Psoas muscle (tissue), 8 donors: ENCODE measurements at regions of chr1 and their contacts with region 1.

Region 1: DNA sequence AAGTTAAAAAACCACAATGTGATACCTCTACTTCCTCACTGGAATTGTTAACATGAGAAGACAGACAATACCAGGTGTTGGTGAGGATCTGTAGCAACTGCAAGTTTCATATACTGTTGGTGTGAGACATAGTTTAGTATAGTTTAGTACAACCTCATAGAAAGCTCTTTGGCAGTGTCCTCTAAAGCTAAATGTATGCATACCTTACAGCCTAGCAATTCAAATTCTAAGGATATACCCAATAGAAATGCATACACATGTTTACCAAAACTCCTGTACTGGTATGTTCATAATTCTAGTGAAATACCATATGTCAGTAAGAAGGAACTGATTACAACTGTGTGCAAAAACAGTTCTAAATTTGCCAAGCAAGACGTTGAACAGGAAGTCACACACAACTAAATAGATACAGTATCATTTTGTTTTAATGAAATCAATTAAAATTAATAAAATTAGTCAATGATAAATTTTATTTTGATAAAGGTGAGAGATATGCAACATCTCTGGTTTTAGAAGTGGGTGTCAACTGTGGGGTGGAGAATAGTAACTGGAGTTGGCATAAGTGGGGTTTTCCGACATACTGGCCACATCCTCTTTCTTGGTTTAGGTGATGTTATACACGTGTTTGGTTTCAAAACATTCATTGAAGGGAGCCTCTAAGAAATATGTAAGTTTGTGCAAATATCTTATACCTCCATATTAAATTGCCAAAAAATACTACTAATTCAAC is 450.7 kb downstream of the PTPRC start:
- DNase-seq: no peak
- ATAC-seq: no peak
- H3K4me3 ChIP-seq: no peak overlapping the region
- H3K27ac ChIP-seq: no peak overlapping the region
- H3K4me1 ChIP-seq: no peaks in the 10 kb centered on the region
- H3K27me3 ChIP-seq: no peaks in the 10 kb centered on the region
- CTCF ChIP-seq: no peak

Region 2: GRCh38 chr1:198848649-198849048 is 240.9 kb before region 1 on chr1:
- intact Hi-C with region 1: no loop called
- DNase-seq: no peak
- ATAC-seq: no peak
- H3K4me3 ChIP-seq: no peak overlapping the region
- H3K27ac ChIP-seq: no peak overlapping the region
- H3K4me1 ChIP-seq: peaks cover 8% of the 10 kb centered on the region
- H3K27me3 ChIP-seq: no peaks in the 10 kb centered on the region
- CTCF ChIP-seq: no peak

Region 3: GRCh38 chr1:199123615-199124014 is 34.1 kb after region 1 on chr1:
- intact Hi-C with region 1: loop called in 1 of 2 experiments (anchors 1 kb)
- DNase-seq: no peak
- ATAC-seq: no peak
- H3K4me3 ChIP-seq: no peak overlapping the region
- H3K27ac ChIP-seq: no peak overlapping the region
- H3K4me1 ChIP-seq: no peaks in the 10 kb centered on the region
- H3K27me3 ChIP-seq: no peaks in the 10 kb centered on the region
- CTCF ChIP-seq: no peak